CD8-positive, alpha-beta memory T cell (primary cell): ENCODE measurements at regions of chr17 and their contacts with region 1.

Region 1: DNA sequence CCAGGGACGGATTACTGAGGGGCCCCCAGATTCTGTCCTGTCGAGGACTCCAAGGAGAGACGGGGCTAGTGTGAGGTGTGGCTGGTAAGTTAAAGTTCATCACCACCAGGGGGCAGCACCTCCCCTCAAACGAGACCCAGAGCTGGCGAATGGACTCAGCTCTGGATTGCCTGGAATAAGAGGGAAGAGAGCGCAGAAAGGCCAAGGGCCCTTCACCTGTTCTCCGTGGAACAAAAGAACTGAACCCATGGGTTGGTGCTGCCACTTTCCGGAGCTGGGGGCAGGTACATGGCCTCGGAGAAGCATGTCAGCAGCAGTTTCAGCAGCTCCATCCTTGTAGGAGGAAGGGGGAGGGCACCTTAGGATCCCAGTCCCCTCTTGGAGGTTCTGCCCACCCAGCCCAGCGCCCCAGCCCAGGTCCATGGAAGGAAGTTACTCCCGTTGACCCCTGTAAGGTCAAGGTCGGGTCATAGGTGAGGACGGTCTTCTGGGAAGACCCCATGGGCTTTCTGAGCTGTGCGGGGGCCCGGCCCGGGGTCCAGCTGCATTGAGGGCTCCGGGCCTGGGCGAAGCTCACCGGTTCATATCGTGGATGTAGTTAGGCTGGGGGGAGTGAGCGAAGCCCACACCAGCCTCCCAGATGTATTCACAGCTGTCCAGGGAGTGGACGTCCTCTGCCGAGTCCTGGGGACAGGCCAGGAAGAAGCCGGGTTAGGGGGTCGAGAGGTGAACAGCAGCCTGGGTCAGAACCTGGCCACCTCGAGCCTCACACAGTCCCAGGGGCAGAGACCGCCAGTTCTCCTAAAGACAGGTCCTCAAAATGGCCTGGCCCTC is 10.7 kb downstream of the HID1 start:
- DNase-seq: peak; percentile 71 to 86 (median 78)
- H3K4me3 ChIP-seq: no peak overlapping the region
- H3K4me3 Mint-ChIP-seq: no peak overlapping the region
- H3K27ac ChIP-seq: no peak overlapping the region
- H3K27ac Mint-ChIP-seq: peak overlapping the region in 3 of 8 donors; percentile 11 to 77 (median 14)
- H3K4me1 ChIP-seq: no peaks in the 10 kb centered on the region
- H3K4me1 Mint-ChIP-seq: peaks cover 4 to 11% (median 7%) of the 10 kb centered on the region in 3 donors
- H3K27me3 ChIP-seq: no peaks in the 10 kb centered on the region
- H3K27me3 Mint-ChIP-seq: peaks cover 0 to 4% of the 10 kb centered on the region in 2 donors

Region 2: DNA sequence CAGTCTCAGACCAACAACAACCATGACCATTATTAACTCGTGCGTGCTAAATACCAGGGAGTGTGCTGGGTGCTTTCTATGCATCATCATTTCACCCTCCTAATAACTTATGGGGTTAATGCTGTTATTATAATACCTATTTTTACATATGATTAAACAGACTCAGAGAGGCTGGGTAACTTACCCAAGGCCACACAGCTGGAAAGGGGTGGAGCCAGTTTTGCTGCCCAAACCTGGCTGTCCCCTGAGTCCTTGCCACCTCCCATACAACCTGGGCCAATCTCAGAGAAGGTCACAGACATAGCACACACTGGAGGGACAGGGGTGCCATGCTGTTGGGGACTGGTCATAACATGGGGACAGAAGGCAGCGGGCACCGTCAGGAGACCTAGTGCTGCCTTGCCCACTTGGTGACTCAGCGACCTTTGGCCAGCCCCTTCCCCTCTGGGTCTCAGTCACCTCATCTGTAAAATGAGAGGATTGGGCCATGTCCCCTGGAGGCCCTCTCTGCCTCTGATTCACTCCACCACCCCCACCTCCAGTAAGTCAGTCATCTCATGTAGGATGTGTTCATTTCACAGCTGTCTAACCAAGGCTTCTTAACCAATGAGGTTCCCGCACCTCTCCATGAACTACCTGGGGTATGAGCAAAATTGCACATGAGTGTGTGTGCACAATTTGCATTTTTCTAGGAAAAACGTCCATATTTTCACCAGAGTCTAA is 57.0 kb before region 1 on chr17:
- CTCF ChIA-PET with region 1: no interaction called
- POLR2A ChIA-PET with region 1: no interaction called
- DNase-seq: no peak
- H3K4me3 ChIP-seq: no peak overlapping the region
- H3K4me3 Mint-ChIP-seq: no peak overlapping the region
- H3K27ac ChIP-seq: no peak overlapping the region
- H3K27ac Mint-ChIP-seq: no peak overlapping the region
- H3K4me1 ChIP-seq: no peaks in the 10 kb centered on the region
- H3K4me1 Mint-ChIP-seq: no peaks in the 10 kb centered on the region
- H3K27me3 ChIP-seq: no peaks in the 10 kb centered on the region
- H3K27me3 Mint-ChIP-seq: peaks cover 2 to 38% of the 10 kb centered on the region in 2 donors

Region 3: GRCh38 chr17:74923533-74924249 is 38.2 kb before region 1 on chr17:
- CTCF ChIA-PET with region 1: interaction called, 21 read pairs
- POLR2A ChIA-PET with region 1: interaction called, 3 read pairs
- DNase-seq: peak; percentile 56 to 73 (median 62)
- H3K4me3 ChIP-seq: no peak overlapping the region
- H3K4me3 Mint-ChIP-seq: peak overlapping the region in 6 of 7 donors; percentile 19 to 78 (median 58)
- H3K27ac ChIP-seq: no peak overlapping the region
- H3K27ac Mint-ChIP-seq: no peak overlapping the region
- H3K4me1 ChIP-seq: peaks cover 9% of the 10 kb centered on the region
- H3K4me1 Mint-ChIP-seq: peaks cover 0 to 27% (median 5%) of the 10 kb centered on the region in 3 donors
- H3K27me3 ChIP-seq: peaks cover 33% of the 10 kb centered on the region
- H3K27me3 Mint-ChIP-seq: peaks cover 38 to 71% of the 10 kb centered on the region in 2 donors

Region 4: GRCh38 chr17:74981318-74981978 is 19.6 kb after region 1 on chr17:
- CTCF ChIA-PET with region 1: interaction called, 84 read pairs
- POLR2A ChIA-PET with region 1: no interaction called
- DNase-seq: no peak
- H3K4me3 ChIP-seq: peak overlapping the region; percentile 66
- H3K4me3 Mint-ChIP-seq: peak overlapping the region; percentile 78 to 92 (median 91)
- H3K27ac ChIP-seq: peak overlapping the region; percentile 57
- H3K27ac Mint-ChIP-seq: peak overlapping the region; percentile 43 to 96 (median 88)
- H3K4me1 ChIP-seq: peaks cover 14% of the 10 kb centered on the region
- H3K4me1 Mint-ChIP-seq: peaks cover 13 to 18% (median 14%) of the 10 kb centered on the region in 3 donors
- H3K27me3 ChIP-seq: peaks cover 3% of the 10 kb centered on the region
- H3K27me3 Mint-ChIP-seq: peaks cover 3 to 4% of the 10 kb centered on the region in 2 donors

Region 5: DNA sequence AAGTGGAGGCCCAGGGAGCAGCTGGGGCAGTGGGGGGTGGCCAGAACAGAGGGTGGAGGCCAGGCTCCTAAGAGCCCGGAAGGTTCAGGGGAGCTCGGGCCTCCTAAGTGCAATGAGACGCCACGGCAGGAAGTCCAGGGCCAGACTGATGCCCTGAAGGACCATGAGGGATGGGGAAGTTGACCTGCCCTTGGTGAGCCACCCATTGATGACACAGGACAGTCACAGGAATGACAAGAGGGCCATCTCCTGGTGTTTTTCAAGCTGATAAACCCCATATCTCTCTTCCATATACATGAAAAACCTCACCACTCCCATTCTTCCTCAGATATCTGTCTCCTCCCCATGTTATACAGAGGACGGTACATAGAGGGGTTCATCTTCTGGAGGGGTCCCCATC is 44.8 kb after region 1 on chr17:
- CTCF ChIA-PET with region 1: interaction called, 48 read pairs
- POLR2A ChIA-PET with region 1: interaction called, 6 read pairs
- DNase-seq: no peak
- H3K4me3 ChIP-seq: no peak overlapping the region
- H3K4me3 Mint-ChIP-seq: peak overlapping the region in 1 of 7 donors; percentile 15
- H3K27ac ChIP-seq: no peak overlapping the region
- H3K27ac Mint-ChIP-seq: no peak overlapping the region
- H3K4me1 ChIP-seq: no peaks in the 10 kb centered on the region
- H3K4me1 Mint-ChIP-seq: peaks cover 0 to 2% (median 0%) of the 10 kb centered on the region in 3 donors
- H3K27me3 ChIP-seq: no peaks in the 10 kb centered on the region
- H3K27me3 Mint-ChIP-seq: peaks cover 0 to 12% of the 10 kb centered on the region in 2 donors

Region 6: DNA sequence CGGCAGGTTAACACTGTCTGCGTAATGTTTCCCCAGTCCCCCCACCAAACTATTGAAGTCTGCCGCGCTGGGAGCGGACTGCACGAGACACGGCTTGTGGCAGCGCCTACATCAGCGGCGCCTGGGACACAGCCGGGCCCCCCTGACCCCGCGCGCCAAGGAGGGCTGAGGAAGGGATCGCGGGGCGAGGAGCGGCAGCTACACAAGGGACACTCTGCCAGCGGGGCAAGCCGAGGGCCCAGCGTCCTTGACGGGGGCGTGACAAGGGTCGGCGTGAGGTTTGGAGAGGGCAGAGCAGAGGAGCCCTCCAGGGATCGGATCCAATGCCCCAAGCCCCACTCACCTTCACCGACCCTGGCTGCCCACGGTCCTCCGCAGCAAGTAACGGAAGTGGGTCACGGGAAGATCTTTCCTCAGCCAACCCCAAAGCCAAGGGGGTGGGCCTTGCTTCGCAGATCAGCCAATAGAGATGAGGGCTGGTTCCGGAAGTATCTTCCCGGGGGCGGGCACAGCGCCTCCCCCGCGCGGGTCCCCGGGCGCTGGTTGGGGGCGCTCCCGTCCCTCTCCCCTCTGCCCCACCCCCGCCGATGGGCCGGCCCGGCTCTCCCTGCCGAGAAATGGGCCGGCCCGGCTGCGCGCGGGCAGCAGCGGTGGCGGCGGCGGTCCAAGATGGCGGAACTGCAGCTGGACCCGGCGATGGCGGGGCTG is 84.9 kb after region 1 on chr17 and contains the starts of genes ATP5PD and KCTD2:
- CTCF ChIA-PET with region 1: interaction called, 12 read pairs
- POLR2A ChIA-PET with region 1: no interaction called
- DNase-seq: peak; percentile 91 to 95 (median 91)
- H3K4me3 ChIP-seq: peak within 1 kb of the TSS; percentile 84
- H3K4me3 Mint-ChIP-seq: peak within 1 kb of the TSS; percentile 95 to 99 (median 97)
- H3K27ac ChIP-seq: peak within 1 kb of the TSS; percentile 94
- H3K27ac Mint-ChIP-seq: peak within 1 kb of the TSS; percentile 95 to 99 (median 98)
- H3K4me1 ChIP-seq: peaks cover 18% of the 10 kb centered on the region
- H3K4me1 Mint-ChIP-seq: peaks cover 36 to 54% (median 51%) of the 10 kb centered on the region in 3 donors
- H3K27me3 ChIP-seq: no peaks in the 10 kb centered on the region
- H3K27me3 Mint-ChIP-seq: no peaks in the 10 kb centered on the region
- total RNA-seq, gene ATP5PD: 179 to 198 TPM
- total RNA-seq, gene KCTD2: 22.2 to 23.8 TPM

Region 7: GRCh38 chr17:75131280-75132017 is 169.6 kb after region 1 on chr17 and contains the start of gene NT5C:
- CTCF ChIA-PET with region 1: interaction called, 11 read pairs
- POLR2A ChIA-PET with region 1: no interaction called
- DNase-seq: peak; percentile 48 to 70 (median 64)
- H3K4me3 ChIP-seq: peak within 1 kb of the TSS; percentile 52
- H3K4me3 Mint-ChIP-seq: peak within 1 kb of the TSS; percentile 84 to 97 (median 89)
- H3K27ac ChIP-seq: peak within 1 kb of the TSS; percentile 67
- H3K27ac Mint-ChIP-seq: peak within 1 kb of the TSS; percentile 56 to 96 (median 88)
- H3K4me1 ChIP-seq: peaks cover 10% of the 10 kb centered on the region
- H3K4me1 Mint-ChIP-seq: peaks cover 7 to 16% (median 11%) of the 10 kb centered on the region in 3 donors
- H3K27me3 ChIP-seq: no peaks in the 10 kb centered on the region
- H3K27me3 Mint-ChIP-seq: no peaks in the 10 kb centered on the region
- total RNA-seq, gene NT5C: 75.7 to 84.8 TPM

Region 8: GRCh38 chr17:75199886-75200618 is 238.2 kb after region 1 on chr17:
- CTCF ChIA-PET with region 1: interaction called, 55 read pairs
- POLR2A ChIA-PET with region 1: interaction called, 3 read pairs
- DNase-seq: no peak
- H3K4me3 ChIP-seq: no peak overlapping the region
- H3K4me3 Mint-ChIP-seq: no peak overlapping the region
- H3K27ac ChIP-seq: no peak overlapping the region
- H3K27ac Mint-ChIP-seq: no peak overlapping the region
- H3K4me1 ChIP-seq: peaks cover 8% of the 10 kb centered on the region
- H3K4me1 Mint-ChIP-seq: peaks cover 7 to 11% (median 11%) of the 10 kb centered on the region in 3 donors
- H3K27me3 ChIP-seq: no peaks in the 10 kb centered on the region
- H3K27me3 Mint-ChIP-seq: no peaks in the 10 kb centered on the region